Activated B cell treated with CpG ODN at 0.5 μM for 24 hours (primary cell): ENCODE measurements at regions of chr13 and their contacts with region 1.

Region 1: DNA sequence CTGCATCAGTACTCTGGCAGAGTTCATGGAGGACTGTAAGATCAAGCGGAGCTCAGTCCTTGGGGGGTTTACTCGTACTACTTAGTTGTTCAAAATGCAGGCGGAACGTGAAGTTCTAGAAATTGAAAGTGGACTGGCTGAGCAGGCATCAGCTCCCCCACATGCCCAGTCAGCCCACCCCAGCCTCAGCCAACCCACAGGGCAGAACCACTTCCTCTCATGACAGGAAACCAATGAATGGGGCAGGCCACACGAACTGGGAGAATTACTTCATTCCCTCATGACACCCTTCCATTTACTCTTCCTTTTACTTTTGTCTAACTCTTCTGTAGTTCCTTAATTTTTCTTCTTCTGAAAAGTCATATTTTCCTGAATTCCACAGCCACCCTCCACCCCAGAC is 71.9 kb downstream of the FLT1 start:
- DNase-seq: peak; percentile 48
- ATAC-seq: peak; percentile 99
- H3K4me3 Mint-ChIP-seq: peak overlapping the region; percentile 76
- H3K27ac Mint-ChIP-seq: peak overlapping the region; percentile 85
- H3K4me1 Mint-ChIP-seq: peaks cover 28% of the 10 kb centered on the region
- H3K27me3 Mint-ChIP-seq: no peaks in the 10 kb centered on the region
- CTCF ChIP-seq: no peak

Region 2: DNA sequence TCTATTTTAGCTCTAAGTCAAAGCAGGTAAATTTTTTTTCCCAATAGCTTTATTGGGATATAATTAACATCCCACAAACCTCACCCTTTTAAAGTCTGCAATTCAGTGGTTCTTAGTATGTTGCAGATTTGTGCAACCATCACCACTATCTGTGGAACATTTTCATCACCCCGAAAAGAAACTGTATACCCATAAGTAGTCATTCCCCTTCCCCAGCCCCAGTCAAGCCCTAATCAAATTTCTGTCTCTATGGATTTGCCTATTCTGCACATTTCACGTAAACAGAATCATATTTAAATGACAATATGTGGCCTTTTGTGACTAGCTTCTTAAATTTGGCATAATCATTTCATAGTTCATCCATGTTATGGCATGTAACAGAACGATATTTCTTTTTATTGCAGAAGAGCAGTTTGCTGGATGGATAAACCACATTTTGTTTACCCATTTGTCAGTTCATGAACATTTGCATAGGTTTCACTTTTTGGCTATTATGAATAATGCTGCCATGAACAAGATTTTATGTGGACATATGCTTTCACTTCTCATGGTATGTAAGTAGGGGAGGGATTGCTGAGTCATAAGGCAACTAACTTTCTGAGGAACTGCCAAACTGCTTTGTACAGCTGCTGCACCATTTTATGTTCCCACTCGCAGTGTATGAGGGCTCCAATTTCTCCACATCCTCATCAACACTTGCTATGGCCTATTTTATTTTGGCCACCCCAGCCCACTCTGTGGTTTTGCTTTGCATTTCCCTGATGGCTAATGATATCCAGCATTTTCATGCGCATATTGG is 284.8 kb after region 1 on chr13:
- CTCF ChIA-PET with region 1: no interaction called
- POLR2A ChIA-PET with region 1: no interaction called
- intact Hi-C with region 1: loop called (anchors 5 kb)
- DNase-seq: no peak
- ATAC-seq: peak; percentile 95
- H3K4me3 Mint-ChIP-seq: peak overlapping the region; percentile 3
- H3K27ac Mint-ChIP-seq: peak overlapping the region; percentile 14
- H3K4me1 Mint-ChIP-seq: peaks cover 9% of the 10 kb centered on the region
- H3K27me3 Mint-ChIP-seq: no peaks in the 10 kb centered on the region
- CTCF ChIP-seq: no peak